ENCODE measurements at regions of chr3 and their contacts with region 1.

Region 1: GRCh38 chr3:106609666-106610301 is 741.0 kb upstream of the CBLB start:
- DNase-seq: peak; percentile 41
- H3K4me3 Mint-ChIP-seq: no peak overlapping the region
- H3K27ac Mint-ChIP-seq: peak overlapping the region; percentile 73
- H3K4me1 Mint-ChIP-seq: peaks cover 26% of the 10 kb centered on the region
- H3K27me3 Mint-ChIP-seq: no peaks in the 10 kb centered on the region

Region 2: DNA sequence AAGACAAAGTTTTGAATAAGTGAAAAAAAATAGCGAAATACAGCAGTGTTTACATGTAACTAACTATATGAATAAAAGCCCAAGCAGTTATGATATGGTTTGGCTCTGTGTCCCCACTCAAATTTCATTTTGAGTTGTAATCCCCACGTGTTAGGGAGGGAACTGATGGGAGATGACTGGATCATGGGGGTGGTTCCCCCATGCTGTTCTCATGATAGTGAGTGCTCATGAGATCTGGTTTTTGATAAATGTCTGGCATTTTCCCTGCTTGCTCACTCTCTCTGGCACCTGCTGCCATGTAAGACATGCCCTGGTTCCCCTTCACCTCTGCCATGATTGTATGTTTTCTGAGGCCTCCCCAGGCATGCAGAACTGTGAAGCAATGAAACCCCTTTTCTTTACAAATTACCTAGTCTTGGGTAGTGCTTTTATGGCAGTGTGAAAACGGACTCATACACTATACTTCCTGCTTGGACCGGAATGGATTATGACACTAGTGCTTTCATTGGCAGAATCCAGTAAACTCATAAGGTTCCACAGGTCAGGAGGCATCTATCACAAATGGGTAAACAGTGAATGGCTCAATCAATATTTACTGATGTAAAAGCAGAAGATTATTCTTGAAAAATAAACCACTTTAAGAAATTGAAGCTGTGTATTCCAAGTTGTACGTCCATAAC is 933.0 kb before region 1 on chr3:
- intact Hi-C with region 1: loop called (anchors 5 kb)
- DNase-seq: no peak
- H3K4me3 Mint-ChIP-seq: no peak overlapping the region
- H3K27ac Mint-ChIP-seq: peak overlapping the region; percentile 74
- H3K4me1 Mint-ChIP-seq: peaks cover 23% of the 10 kb centered on the region
- H3K27me3 Mint-ChIP-seq: no peaks in the 10 kb centered on the region

Region 3: GRCh38 chr3:106215047-106215446 is 394.7 kb before region 1 on chr3:
- intact Hi-C with region 1: loop called (anchors 5 kb)
- DNase-seq: no peak
- H3K4me3 Mint-ChIP-seq: peak overlapping the region; percentile 19
- H3K27ac Mint-ChIP-seq: peak overlapping the region; percentile 79
- H3K4me1 Mint-ChIP-seq: peaks cover 47% of the 10 kb centered on the region
- H3K27me3 Mint-ChIP-seq: no peaks in the 10 kb centered on the region

Region 4: GRCh38 chr3:106428565-106428994 is 181.2 kb before region 1 on chr3:
- intact Hi-C with region 1: loop called (anchors 1 kb)
- DNase-seq: no peak
- H3K4me3 Mint-ChIP-seq: no peak overlapping the region
- H3K27ac Mint-ChIP-seq: peak overlapping the region; percentile 93
- H3K4me1 Mint-ChIP-seq: peaks cover 44% of the 10 kb centered on the region
- H3K27me3 Mint-ChIP-seq: no peaks in the 10 kb centered on the region

Region 5: GRCh38 chr3:107064445-107065060 is 454.8 kb after region 1 on chr3:
- intact Hi-C with region 1: loop called (anchors 10 kb)
- DNase-seq: peak; percentile 33
- H3K4me3 Mint-ChIP-seq: no peak overlapping the region
- H3K27ac Mint-ChIP-seq: no peak overlapping the region
- H3K4me1 Mint-ChIP-seq: peaks cover 12% of the 10 kb centered on the region
- H3K27me3 Mint-ChIP-seq: peaks cover 8% of the 10 kb centered on the region

Measured in activated T-helper 2 cell treated with anti-CD3 and anti-CD28 coated beads, Interferon-gamma antibody, Interleukin-2, Interleukin-4, amounts not matched to agents 10 μg/mL and 5 μg/mL and 100 μg/mL, durations not matched to agents 14 hours and 24 hours and 36 hours (primary cell).